ENCODE measurements at regions of chrX and their contacts with region 1.

Region 1: GRCh38 chrX:55717521-55718497 is at the start of gene RRAGB:
- DNase-seq: peak; percentile 96
- H3K4me3 Mint-ChIP-seq: peak within 1 kb of the TSS; percentile 93
- H3K27ac Mint-ChIP-seq: peak within 1 kb of the TSS; percentile 85
- H3K4me1 Mint-ChIP-seq: peaks cover 16% of the 10 kb centered on the region
- H3K27me3 Mint-ChIP-seq: no peaks in the 10 kb centered on the region
- total RNA-seq, gene RRAGB: 6.5 and 8.2 TPM in 2 replicates

Region 2: GRCh38 chrX:55750256-55750655 is 32.4 kb after region 1 on chrX:
- intact Hi-C with region 1: no loop called
- DNase-seq: no peak
- H3K4me3 Mint-ChIP-seq: no peak overlapping the region
- H3K27ac Mint-ChIP-seq: no peak overlapping the region
- H3K4me1 Mint-ChIP-seq: no peaks in the 10 kb centered on the region
- H3K27me3 Mint-ChIP-seq: no peaks in the 10 kb centered on the region

Region 3: GRCh38 chrX:55907968-55908607 is 190.3 kb after region 1 on chrX:
- intact Hi-C with region 1: loop called (anchors 1 kb)
- DNase-seq: peak; percentile 82
- H3K4me3 Mint-ChIP-seq: peak overlapping the region; percentile 93
- H3K27ac Mint-ChIP-seq: peak overlapping the region; percentile 92
- H3K4me1 Mint-ChIP-seq: peaks cover 23% of the 10 kb centered on the region
- H3K27me3 Mint-ChIP-seq: no peaks in the 10 kb centered on the region

Measured in activated CD4-positive, alpha-beta T cell treated with anti-CD3 and anti-CD28 coated beads, Interleukin-2, amount 10 ng/mL, durations not matched to agents 24 days and 14 days (primary cell).